ENCODE measurements at regions of chr10 and their contacts with region 1.

Region 1: GRCh38 chr10:97572214-97572989 is at the start of gene ANKRD2:
- DNase-seq: peak; percentile 72
- ATAC-seq: peak; percentile 89
- H3K4me3 Mint-ChIP-seq: no peak within 1 kb of the TSS
- H3K27ac Mint-ChIP-seq: no peak within 1 kb of the TSS
- H3K4me1 Mint-ChIP-seq: no peaks in the 10 kb centered on the region
- H3K27me3 Mint-ChIP-seq: no peaks in the 10 kb centered on the region
- CTCF ChIP-seq: peak; percentile 71
- total RNA-seq, gene ANKRD2: not detected

Region 2: DNA sequence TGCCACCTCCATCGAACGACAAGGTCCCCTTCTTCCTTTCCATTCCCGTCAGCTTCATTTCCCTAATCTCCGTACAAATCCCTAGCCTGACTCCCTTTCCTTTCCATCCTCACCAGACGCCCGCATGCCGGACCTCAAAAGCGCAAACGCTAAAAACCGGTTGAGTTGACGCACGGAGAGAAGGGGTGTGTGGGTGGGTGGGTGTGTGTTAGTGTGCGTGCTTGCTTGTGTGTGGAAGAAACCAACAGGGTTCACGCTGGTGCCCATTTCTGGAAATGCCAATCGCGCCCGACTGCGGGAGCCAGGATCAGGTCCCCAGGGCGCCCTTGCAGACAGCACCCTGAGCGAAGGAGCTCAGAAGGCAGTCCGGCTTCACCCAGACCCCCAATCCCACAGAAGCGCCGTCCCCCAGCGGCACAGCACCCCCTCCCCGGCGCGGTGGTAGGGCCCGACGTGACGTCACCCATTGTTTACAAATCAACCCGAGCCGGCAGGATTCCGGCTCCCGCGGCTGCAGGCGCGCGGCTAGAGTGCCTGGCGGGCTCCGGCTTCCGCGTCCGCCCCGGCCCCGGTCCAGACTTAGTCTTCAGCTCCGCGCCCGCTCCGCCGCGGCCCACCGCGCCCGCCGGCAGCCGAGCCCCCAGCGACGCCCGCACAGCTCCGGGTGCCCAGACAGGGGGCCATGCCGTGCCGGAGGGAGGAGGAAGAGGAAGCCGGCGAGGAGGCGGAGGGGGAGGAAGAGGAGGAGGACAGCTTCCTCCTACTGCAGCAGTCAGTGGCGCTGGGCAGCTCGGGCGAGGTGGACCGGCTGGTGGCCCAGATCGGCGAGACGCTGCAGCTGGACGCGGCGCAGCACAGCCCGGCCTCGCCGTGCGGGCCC is 253.4 kb before region 1 on chr10 and contains the start of gene FRAT1:
- CTCF ChIA-PET with region 1: no interaction called
- POLR2A ChIA-PET with region 1: no interaction called
- intact Hi-C with region 1: no loop called
- DNase-seq: peak; percentile 91
- ATAC-seq: peak; percentile 70
- H3K4me3 Mint-ChIP-seq: peak within 1 kb of the TSS; percentile 83
- H3K27ac Mint-ChIP-seq: peak within 1 kb of the TSS; percentile 99
- H3K4me1 Mint-ChIP-seq: peaks cover 21% of the 10 kb centered on the region
- H3K27me3 Mint-ChIP-seq: peaks cover 2% of the 10 kb centered on the region
- CTCF ChIP-seq: no peak
- total RNA-seq, gene FRAT1: 3.0 to 3.2 TPM

Region 3: GRCh38 chr10:97553575-97554031 is 18.8 kb before region 1 on chr10:
- CTCF ChIA-PET with region 1: interaction called, 26 read pairs
- POLR2A ChIA-PET with region 1: interaction called, 3 read pairs
- intact Hi-C with region 1: no loop called
- DNase-seq: peak; percentile 76
- ATAC-seq: peak; percentile 99
- H3K4me3 Mint-ChIP-seq: no peak overlapping the region
- H3K27ac Mint-ChIP-seq: no peak overlapping the region
- H3K4me1 Mint-ChIP-seq: no peaks in the 10 kb centered on the region
- H3K27me3 Mint-ChIP-seq: no peaks in the 10 kb centered on the region
- CTCF ChIP-seq: peak; percentile 74

Region 4: GRCh38 chr10:97590082-97590747 is 17.8 kb after region 1 on chr10:
- CTCF ChIA-PET with region 1: interaction called, 14 read pairs
- POLR2A ChIA-PET with region 1: no interaction called
- intact Hi-C with region 1: no loop called
- DNase-seq: peak; percentile 49
- ATAC-seq: peak; percentile 51
- H3K4me3 Mint-ChIP-seq: no peak overlapping the region
- H3K27ac Mint-ChIP-seq: no peak overlapping the region
- H3K4me1 Mint-ChIP-seq: no peaks in the 10 kb centered on the region
- H3K27me3 Mint-ChIP-seq: no peaks in the 10 kb centered on the region
- CTCF ChIP-seq: no peak

Region 5: GRCh38 chr10:97612386-97612785 is 40.0 kb after region 1 on chr10:
- CTCF ChIA-PET with region 1: interaction called, 16 read pairs
- POLR2A ChIA-PET with region 1: no interaction called
- intact Hi-C with region 1: no loop called
- DNase-seq: no peak
- ATAC-seq: no peak
- H3K4me3 Mint-ChIP-seq: no peak overlapping the region
- H3K27ac Mint-ChIP-seq: no peak overlapping the region
- H3K4me1 Mint-ChIP-seq: no peaks in the 10 kb centered on the region
- H3K27me3 Mint-ChIP-seq: no peaks in the 10 kb centered on the region
- CTCF ChIP-seq: no peak

Measured in activated CD8-positive, alpha-beta T cell treated with anti-CD3 and anti-CD28 coated beads for 36 hours (primary cell).